AG04450 (cell line): ENCODE measurements at regions of chr11 and their contacts with region 1.

Region 1: DNA sequence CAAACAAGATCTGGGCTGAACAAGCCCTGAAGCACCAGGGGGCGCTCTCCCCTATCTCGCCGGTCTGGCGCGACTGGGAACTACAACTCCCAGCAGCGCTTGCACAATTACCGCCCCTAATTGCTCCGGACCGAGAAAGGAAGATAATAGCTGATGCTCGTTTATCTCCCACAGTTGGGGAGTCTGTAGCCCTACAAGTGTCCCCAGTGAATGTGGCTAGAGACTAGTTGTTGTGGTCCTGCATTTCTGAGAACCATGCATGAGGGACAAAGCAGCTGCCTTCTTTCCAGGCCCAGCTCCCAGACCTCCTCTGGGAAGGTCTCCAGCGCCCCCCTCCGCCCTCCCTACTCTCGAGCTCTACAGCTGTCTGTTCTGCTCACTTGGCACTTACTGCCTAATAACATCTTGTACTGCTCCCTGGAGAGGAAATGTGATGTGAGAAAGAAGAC is 34.4 kb downstream of the NRXN2 start:
- DNase-seq: peak; percentile 50
- H3K4me3 ChIP-seq: peak overlapping the region; percentile 59
- H3K27ac ChIP-seq: no peak overlapping the region
- H3K27me3 ChIP-seq: peaks cover 48% of the 10 kb centered on the region
- CTCF ChIP-seq: peak; percentile 86

Region 2: DNA sequence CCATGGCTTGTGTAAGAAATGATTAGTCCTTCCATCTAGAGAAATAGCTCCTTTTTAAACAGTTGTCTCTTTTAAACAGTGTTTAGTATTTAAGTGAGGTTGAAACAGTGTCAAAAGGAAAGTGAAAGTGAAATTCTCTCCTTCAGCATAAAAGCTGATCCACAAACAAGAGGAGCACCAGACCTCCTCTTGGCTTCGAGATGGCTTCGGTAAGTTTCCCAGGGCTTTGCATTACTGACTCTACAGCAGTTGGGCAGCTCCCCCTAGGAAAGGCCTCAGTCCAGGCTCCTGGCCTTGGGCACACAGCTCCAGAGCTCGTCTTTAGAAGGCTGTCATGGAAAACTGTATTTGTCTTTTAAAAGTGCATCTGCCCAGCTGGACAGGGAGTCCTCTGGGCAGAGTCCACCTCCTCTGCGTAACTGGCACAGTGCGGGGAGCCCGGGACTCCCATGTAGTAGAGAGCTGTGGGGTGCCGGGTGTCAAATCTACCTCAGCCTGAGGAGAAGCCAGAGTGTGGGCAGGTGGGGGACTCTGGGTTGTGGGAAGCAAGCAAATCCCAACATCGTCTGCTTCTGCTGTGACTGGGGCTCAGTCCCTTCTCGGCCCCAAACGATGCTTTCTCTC is 1151.8 kb before region 1 on chr11 and contains the start of gene PLAAT4:
- CTCF ChIA-PET with region 1: no interaction called
- POLR2A ChIA-PET with region 1: no interaction called
- DNase-seq: no peak
- H3K4me3 ChIP-seq: peak within 1 kb of the TSS; percentile 53
- H3K27ac ChIP-seq: peak within 1 kb of the TSS; percentile 47
- H3K27me3 ChIP-seq: peaks cover 8% of the 10 kb centered on the region
- CTCF ChIP-seq: 0 out of 2 replicates have a peak, but pooled peaks have one; percentile 8
- polyA plus RNA-seq, gene PLAAT4: 3.5 and 4.7 TPM in 2 replicates

Region 3: DNA sequence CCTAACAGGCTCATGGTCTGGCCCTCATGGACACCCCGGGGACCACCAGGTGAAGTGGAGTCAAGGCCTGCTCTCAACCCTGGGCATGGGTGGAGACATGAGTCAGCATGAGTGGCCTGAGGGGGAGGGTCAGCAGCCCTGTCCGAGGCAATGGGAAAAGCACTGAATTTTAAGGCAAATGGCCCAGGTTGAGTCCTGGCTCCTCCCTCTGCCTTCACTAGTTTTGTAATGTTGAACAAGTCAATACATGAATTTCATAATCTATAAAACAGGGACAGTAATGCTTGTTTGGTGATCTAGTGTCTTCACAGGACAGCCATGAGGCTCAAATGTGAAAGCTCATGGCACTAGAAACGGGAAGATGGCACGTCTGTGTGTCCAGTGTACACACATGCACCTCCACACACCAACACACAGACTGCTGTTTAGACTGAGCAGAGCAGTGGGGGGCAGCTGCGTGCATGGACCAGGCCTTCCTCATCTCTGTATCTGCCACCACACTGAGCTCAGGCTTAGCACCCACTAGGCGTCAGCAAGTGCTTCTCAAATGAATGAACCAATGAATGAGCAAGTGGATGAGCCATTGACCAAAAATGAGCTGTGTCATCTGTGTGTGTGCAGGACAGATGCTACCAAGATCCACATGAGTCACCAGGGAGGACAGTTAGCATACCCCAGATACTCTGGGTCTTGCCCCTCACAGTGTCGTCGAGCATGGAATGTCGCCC is 29.0 kb before region 1 on chr11:
- CTCF ChIA-PET with region 1: interaction called, 14 read pairs
- POLR2A ChIA-PET with region 1: interaction called, 3 read pairs
- DNase-seq: peak; percentile 26
- H3K4me3 ChIP-seq: no peak overlapping the region
- H3K27ac ChIP-seq: no peak overlapping the region
- H3K27me3 ChIP-seq: peaks cover 3% of the 10 kb centered on the region
- CTCF ChIP-seq: no peak

Region 4: GRCh38 chr11:64703048-64703447 is 14.5 kb after region 1 on chr11:
- CTCF ChIA-PET with region 1: interaction called, 35 read pairs
- POLR2A ChIA-PET with region 1: no interaction called
- DNase-seq: no peak
- H3K4me3 ChIP-seq: no peak overlapping the region
- H3K27ac ChIP-seq: no peak overlapping the region
- H3K27me3 ChIP-seq: peaks cover 40% of the 10 kb centered on the region
- CTCF ChIP-seq: no peak

Region 5: GRCh38 chr11:64716473-64717267 is 28.1 kb after region 1 on chr11:
- CTCF ChIA-PET with region 1: interaction called, 22 read pairs
- POLR2A ChIA-PET with region 1: no interaction called
- DNase-seq: no peak
- H3K4me3 ChIP-seq: no peak overlapping the region
- H3K27ac ChIP-seq: no peak overlapping the region
- H3K27me3 ChIP-seq: peaks cover 77% of the 10 kb centered on the region
- CTCF ChIP-seq: no peak

Region 6: DNA sequence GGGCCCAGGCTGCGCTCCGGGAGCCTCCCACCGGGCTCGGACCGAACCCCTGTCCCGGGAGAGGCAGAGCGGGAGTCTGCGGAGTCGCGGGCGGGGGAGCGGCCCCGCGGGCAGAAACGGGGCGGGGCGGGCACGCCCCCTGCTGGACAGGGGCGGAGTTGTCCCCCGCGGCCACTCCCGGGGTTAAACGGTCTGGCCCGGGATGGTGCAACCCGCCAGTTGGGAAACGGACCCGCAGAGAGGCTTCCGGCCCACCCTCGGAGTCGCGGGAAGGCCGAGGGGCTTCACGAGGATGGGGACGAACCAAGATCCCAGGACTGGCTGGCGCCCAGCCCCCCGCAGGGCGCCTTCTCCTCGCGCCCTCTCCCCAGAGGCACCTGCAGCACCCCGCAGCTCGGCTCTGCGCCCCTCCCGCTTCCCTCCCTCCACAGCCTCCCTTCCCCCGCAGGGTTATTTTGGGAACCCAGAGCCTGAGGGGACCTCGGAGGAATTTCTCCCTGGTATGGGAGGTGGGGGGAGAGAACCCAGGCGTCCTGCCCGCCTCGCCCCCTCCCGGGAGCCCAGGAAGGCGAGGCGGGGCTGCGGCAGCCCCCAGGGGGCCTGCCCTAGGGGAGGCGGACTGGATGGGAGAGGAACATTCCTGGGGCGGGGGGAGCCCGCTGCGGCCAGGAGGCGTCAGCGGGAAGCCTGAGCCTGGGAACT is 54.5 kb after region 1 on chr11:
- CTCF ChIA-PET with region 1: interaction called, 14 read pairs
- POLR2A ChIA-PET with region 1: interaction called, 6 read pairs
- DNase-seq: no peak
- H3K4me3 ChIP-seq: peak overlapping the region; percentile 50
- H3K27ac ChIP-seq: no peak overlapping the region
- H3K27me3 ChIP-seq: peaks cover 66% of the 10 kb centered on the region
- CTCF ChIP-seq: peak; percentile 73